ENCODE measurements at regions of chr3 and their contacts with region 1.

Region 1: DNA sequence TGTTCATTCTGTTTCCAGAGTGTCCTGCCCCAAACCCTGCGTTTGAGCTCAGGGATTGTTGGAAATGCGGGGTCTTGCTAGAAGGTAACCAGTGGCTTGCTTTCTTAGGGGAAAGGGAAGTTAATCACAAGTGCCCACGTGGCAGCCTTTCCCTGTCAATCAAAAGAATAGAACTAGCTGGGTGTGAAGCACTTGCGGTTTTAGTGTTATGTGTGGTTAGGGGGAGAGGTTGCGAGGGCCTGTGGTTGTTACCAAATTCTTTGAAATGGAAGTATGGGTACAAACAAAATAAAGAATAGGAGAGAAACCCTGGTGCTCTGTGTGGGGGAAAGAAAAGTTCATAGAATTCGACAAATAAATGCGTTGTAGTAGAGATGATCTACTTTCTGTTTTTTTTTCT is 67.6 kb downstream of the FNDC3B start:
- DNase-seq: peak; percentile 79
- H3K4me3 Mint-ChIP-seq: peak overlapping the region; percentile 52
- H3K27ac Mint-ChIP-seq: peak overlapping the region; percentile 84
- H3K4me1 Mint-ChIP-seq: peaks cover 72% of the 10 kb centered on the region
- H3K27me3 Mint-ChIP-seq: no peaks in the 10 kb centered on the region

Region 2: DNA sequence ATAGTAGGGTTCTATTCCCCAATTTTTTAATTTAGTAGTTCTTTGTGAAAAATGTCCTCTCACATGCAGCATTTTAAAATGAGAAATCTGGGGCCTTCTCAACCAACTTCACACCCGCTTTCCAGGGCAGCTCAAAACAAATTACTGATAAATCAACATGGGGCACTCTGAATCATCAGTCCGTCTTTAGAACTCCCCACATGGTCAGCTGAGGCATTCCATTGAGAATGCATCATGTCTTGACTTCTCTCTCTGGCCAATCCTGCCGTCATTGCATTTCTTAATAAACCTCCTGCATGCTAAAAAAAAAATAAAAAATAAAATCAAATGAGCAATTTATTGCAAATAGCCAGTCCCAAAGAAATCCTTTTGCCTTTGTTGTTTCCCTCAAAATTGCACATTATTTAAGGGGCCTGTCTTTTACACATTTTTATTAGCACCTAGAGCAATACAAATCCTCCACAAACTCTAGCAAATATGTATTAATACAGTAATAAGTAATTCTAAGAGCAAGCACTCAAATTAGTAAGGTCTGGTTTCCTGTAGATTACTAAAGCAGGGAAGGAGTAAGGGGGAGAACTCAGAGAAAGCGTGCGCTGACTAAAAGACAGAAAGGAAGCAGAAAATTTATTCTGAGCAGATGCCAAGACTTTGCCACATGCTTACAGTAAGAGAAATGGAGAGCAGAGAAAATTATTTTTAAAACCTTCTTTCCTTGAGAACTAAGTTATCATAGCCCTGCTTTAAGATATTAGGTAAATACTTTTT is 822.5 kb before region 1 on chr3:
- CTCF ChIA-PET with region 1: no interaction called
- intact Hi-C with region 1: loop called (anchors 10 kb)
- DNase-seq: peak; percentile 55
- H3K4me3 Mint-ChIP-seq: peak overlapping the region; percentile 22
- H3K27ac Mint-ChIP-seq: peak overlapping the region; percentile 76
- H3K4me1 Mint-ChIP-seq: peaks cover 66% of the 10 kb centered on the region
- H3K27me3 Mint-ChIP-seq: no peaks in the 10 kb centered on the region

Region 3: GRCh38 chr3:172046268-172046915 is 60.6 kb before region 1 on chr3:
- CTCF ChIA-PET with region 1: interaction called, 4 read pairs
- intact Hi-C with region 1: loop called (anchors 1 kb)
- DNase-seq: peak; percentile 21
- H3K4me3 Mint-ChIP-seq: no peak overlapping the region
- H3K27ac Mint-ChIP-seq: no peak overlapping the region
- H3K4me1 Mint-ChIP-seq: peaks cover 28% of the 10 kb centered on the region
- H3K27me3 Mint-ChIP-seq: no peaks in the 10 kb centered on the region

Region 4: DNA sequence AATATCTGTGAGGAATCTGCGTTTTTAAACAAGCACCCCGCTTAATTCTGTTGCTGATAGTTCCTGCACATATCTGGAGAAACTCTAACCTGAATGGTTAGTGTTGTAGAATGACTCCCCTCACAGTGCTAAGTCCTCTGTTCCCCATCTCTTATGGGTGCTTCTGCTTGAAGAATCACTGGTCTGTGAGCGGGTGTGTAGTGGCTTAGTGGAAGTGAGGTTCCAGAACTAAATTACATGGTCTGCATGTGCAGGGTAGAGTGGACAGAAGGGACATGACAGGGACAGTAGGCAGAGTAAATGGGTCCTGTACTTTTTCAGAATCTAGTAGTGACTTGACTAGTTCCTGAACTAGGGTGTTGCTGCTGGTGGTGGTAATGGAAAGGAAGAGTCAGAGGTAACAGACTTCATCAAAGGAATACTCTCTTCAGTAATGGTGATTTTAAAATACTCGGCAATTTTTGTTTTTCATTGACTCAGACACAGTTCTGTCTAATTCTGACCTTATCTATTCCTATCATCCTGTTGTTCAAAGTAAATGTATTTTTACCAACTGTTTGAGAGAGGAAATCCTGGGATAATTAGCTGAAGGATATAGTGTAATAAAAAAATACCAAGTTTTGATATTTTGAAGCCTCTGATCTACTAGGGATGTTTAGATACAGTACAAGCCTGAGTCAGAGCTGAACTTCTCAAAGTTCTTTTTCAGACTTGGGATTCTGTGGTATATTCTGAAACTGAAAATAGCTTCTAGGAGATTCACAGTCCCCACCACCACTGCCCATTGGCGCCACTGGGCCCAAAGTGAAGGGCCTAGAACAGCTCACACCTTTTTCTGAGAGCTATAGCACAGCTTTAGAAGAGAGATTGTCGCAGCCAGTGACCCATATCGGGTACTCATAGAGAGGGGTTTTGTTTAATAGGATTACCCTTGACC is 12.1 kb before region 1 on chr3:
- CTCF ChIA-PET with region 1: interaction called, 6 read pairs
- intact Hi-C with region 1: loop called (anchors 1 kb)
- DNase-seq: peak; percentile 23
- H3K4me3 Mint-ChIP-seq: no peak overlapping the region
- H3K27ac Mint-ChIP-seq: no peak overlapping the region
- H3K4me1 Mint-ChIP-seq: peaks cover 51% of the 10 kb centered on the region
- H3K27me3 Mint-ChIP-seq: no peaks in the 10 kb centered on the region

Region 5: DNA sequence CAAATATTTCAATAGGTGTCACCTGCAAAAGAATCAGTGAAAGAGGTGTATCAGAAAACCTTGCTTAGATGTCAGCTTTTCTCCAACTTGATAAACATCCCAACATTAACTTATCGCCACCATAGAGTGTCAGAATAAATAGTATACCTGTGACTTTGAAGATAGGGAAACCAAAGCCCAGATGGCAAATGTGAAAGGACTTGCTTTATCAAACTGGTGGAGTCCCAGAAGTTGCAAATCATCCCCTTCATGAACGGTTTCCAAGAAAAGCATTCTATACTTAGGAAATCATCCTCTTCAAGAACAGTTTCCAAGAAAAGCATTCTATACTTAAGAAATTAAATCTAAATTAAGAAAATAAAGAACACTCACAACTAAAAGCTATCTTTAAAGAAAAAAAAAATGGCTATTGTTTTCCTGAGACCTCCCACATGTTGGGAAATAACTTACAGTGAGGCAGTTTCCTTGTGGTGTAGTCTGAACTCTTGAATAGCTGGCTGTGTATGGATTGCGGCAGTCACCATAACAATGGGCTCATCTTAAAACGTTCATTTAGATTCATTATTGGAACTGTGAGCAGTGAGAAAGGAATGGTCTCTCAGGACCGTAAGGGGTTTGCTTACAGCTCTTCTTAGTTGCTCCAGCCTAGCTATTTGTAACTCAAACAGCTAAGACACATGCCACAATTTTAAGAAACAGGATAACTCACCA is 284.8 kb after region 1 on chr3:
- CTCF ChIA-PET with region 1: no interaction called
- intact Hi-C with region 1: no loop called
- DNase-seq: no peak
- H3K4me3 Mint-ChIP-seq: no peak overlapping the region
- H3K27ac Mint-ChIP-seq: no peak overlapping the region
- H3K4me1 Mint-ChIP-seq: no peaks in the 10 kb centered on the region
- H3K27me3 Mint-ChIP-seq: no peaks in the 10 kb centered on the region

Region 6: GRCh38 chr3:172522871-172523818 is 416.2 kb after region 1 on chr3 and contains the start of gene TNFSF10:
- CTCF ChIA-PET with region 1: no interaction called
- intact Hi-C with region 1: loop called (anchors 1 kb)
- DNase-seq: peak; percentile 78
- H3K4me3 Mint-ChIP-seq: peak within 1 kb of the TSS; percentile 96
- H3K27ac Mint-ChIP-seq: peak within 1 kb of the TSS; percentile 96
- H3K4me1 Mint-ChIP-seq: peaks cover 42% of the 10 kb centered on the region
- H3K27me3 Mint-ChIP-seq: no peaks in the 10 kb centered on the region
- total RNA-seq, gene TNFSF10: 31.8 to 32.7 TPM

Region 7: GRCh38 chr3:172808969-172809546 is 702.1 kb after region 1 on chr3:
- CTCF ChIA-PET with region 1: no interaction called
- intact Hi-C with region 1: no loop called
- DNase-seq: no peak
- H3K4me3 Mint-ChIP-seq: no peak overlapping the region
- H3K27ac Mint-ChIP-seq: no peak overlapping the region
- H3K4me1 Mint-ChIP-seq: peaks cover 1% of the 10 kb centered on the region
- H3K27me3 Mint-ChIP-seq: no peaks in the 10 kb centered on the region

Measured in activated naive CD4-positive, alpha-beta T cell treated with anti-CD3 and anti-CD28 coated beads for 36 hours (primary cell).